Activated naive CD4-positive, alpha-beta T cell treated with anti-CD3 and anti-CD28 coated beads for 36 hours (primary cell): ENCODE measurements at regions of chr22 and their contacts with region 1.

Region 1: DNA sequence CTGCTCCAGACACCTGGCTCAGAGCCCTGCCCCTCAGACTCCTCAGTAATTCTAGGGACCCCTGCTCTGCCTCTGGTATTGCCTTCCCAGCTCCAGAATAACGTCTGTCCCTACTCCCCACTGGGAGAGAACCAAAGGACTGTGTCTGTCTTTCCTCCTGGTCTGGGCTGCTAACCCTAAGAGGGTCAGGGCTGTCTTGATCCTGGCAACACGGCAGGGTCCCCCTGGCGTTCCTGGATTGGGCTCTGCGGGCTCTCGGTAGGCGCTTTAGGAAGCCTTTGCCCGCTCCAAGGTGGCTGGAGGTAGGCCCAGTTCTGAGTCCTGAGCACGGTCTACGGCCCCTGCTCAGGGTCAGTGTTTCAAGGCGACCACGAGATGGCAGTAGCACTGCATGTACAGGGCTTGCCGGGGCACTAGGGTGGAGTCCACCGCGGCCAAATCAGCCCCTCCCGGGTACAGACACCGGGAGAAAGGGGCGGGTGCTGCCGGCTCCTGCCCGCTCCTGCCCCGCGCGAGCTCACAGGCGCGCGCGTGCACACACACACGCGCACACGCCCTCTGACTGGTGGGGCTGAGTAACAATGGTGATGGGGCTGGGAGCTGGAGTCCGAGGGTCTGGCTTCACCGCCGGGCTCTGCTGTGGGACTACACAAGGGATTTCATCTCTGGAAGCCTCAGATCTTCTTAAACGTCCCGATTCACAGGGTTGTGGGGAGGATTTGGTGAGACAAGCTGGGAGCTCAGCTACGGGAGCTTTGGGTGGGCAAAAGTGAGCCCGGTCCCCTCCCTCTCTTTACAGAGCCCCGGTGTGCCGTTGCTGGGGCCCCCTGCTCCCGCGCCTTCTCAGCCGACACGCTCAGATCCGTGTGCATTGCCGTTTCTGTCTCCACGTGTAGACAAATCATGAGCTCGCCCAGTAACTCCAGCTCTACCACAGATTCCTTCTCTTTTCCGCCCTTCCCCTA is 30.1 kb upstream of the HMOX1 start:
- DNase-seq: peak; percentile 90
- H3K4me3 Mint-ChIP-seq: peak overlapping the region; percentile 59
- H3K27ac Mint-ChIP-seq: no peak overlapping the region
- H3K4me1 Mint-ChIP-seq: peaks cover 25% of the 10 kb centered on the region
- H3K27me3 Mint-ChIP-seq: peaks cover 9% of the 10 kb centered on the region

Region 2: DNA sequence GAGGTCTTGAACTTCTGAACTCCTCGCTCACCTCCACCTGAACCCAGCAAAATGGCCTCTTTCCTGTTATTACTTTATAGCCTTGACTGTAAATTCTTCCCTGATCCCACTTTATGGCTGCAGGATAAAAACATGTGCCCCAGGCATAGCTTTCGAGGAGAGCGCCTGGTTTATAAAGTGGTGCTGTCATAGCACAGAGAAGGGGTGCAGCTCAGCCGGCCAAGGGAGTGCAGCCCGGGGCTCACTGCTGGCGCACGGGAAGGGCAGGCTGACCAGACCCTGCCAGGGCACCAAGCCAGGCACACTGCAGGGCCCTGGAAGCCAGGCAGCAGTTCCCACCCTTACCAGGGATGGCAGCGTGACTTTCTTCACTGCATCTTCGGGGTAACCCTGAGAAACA is 234.0 kb before region 1 on chr22:
- CTCF ChIA-PET with region 1: no interaction called
- intact Hi-C with region 1: no loop called
- DNase-seq: no peak
- H3K4me3 Mint-ChIP-seq: no peak overlapping the region
- H3K27ac Mint-ChIP-seq: no peak overlapping the region
- H3K4me1 Mint-ChIP-seq: no peaks in the 10 kb centered on the region
- H3K27me3 Mint-ChIP-seq: no peaks in the 10 kb centered on the region

Region 3: DNA sequence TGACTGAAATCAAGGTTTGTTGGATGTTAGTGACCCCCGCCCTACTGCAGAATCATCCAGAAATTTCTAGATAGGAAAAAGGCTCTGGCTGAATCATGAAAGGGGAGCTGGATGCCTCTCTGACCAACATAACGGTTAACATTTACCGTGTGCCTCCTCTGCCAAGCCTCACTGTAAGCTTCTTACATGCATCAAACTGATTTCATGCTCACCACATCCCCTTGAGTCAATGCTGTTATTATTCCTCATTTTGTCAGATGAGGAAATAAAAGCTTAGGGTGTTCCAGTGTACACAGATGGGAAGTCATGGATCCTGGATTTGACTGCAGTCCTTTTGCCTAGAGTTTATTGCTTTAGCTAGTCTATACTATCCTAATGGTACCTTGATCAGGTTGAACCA is 24.2 kb after region 1 on chr22:
- CTCF ChIA-PET with region 1: interaction called, 10 read pairs
- intact Hi-C with region 1: no loop called
- DNase-seq: no peak
- H3K4me3 Mint-ChIP-seq: no peak overlapping the region
- H3K27ac Mint-ChIP-seq: no peak overlapping the region
- H3K4me1 Mint-ChIP-seq: peaks cover 17% of the 10 kb centered on the region
- H3K27me3 Mint-ChIP-seq: peaks cover 3% of the 10 kb centered on the region

Region 4: DNA sequence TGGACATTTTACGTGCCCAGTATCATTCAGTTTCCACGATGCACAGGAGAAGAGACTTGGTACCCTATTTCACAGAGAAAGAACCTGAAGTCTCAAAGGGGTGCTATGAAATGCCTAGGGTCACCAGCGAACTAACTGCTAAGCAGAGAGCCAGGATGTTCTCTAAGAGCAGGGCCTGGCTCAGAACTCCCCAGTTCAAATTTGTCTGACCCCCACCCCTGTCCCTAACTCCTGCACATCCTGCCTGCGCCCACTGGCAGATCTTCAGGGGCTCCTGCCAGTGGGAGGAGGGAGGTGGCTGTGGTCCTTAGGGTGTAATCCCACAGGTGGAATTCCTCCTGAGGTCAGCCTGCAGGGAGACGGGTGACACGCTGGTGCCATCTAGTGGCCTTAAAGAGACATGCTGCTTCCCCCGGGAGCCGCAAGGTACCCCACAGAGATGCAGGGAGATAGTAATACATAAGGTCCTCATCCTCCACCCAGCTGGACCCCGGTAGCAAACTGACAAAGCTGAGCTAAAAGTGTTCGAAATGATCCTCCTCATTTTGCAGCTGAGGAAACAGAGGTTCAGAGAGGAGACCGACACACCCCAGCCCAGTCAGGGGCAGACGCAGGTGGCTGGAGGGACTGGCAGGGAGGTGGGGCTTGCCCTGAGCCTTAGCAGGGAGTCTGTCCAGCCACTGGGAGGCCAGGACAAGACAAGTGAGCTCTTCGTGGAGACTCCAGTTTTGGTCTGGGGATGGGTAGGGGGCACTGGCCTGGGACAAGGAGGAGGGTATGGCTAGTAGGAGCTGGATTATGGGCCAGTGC is 232.2 kb after region 1 on chr22:
- CTCF ChIA-PET with region 1: interaction called, 44 read pairs
- intact Hi-C with region 1: loop called (anchors 1 kb)
- DNase-seq: peak; percentile 55
- H3K4me3 Mint-ChIP-seq: no peak overlapping the region
- H3K27ac Mint-ChIP-seq: no peak overlapping the region
- H3K4me1 Mint-ChIP-seq: no peaks in the 10 kb centered on the region
- H3K27me3 Mint-ChIP-seq: no peaks in the 10 kb centered on the region

Region 5: GRCh38 chr22:35921777-35922176 is 571.0 kb after region 1 on chr22:
- CTCF ChIA-PET with region 1: interaction called, 5 read pairs
- intact Hi-C with region 1: loop called (anchors 1 kb)
- DNase-seq: peak; percentile 69
- H3K4me3 Mint-ChIP-seq: no peak overlapping the region
- H3K27ac Mint-ChIP-seq: no peak overlapping the region
- H3K4me1 Mint-ChIP-seq: peaks cover 4% of the 10 kb centered on the region
- H3K27me3 Mint-ChIP-seq: no peaks in the 10 kb centered on the region

Region 6: DNA sequence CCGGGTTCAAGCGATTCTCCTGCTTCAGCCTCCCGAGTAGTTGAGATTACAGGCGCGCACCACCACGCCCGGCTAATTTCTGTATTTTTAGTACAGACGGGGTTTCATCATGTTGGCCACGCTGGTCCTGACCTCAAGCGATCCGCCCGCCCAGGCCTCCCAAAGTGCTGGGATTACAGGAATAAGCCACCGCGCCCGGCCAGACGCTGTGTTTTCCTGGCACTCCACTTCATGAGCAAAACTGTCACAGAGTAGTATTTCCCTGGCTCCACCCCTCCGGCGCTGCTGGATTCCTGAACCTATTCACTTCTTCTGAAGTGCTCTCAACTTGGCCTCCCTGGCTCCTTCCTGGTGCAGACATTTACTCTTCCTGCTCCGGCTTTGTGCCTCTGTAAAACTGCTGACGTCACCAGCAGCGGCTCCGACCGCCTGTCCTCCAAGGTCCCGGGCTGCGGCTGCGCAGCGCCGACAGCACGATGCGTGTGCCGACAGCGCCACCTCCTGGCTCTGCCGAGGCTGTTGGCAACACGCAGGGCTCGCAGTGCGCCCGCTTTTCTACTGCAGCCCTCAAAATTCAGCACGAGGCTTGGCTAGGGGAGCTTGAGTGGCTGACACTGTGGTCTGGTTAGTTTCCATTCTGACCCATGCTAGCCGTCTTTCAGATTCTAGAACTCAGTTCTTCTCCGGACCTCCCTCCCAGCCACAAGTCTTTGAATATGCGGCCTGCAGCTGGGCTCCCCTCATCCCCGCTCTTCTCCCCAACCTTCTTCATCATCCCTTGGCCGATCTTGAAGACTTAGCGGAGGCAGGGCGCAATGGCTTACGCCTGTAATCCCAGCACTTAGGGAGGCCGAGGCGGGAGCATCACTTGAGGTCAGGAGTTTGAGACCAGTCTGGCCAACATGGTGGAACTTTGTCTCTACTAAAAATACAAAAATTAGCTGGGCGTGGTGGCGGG is 773.1 kb after region 1 on chr22:
- CTCF ChIA-PET with region 1: interaction called, 3 read pairs
- intact Hi-C with region 1: loop called (anchors 1 kb)
- DNase-seq: peak; percentile 95
- H3K4me3 Mint-ChIP-seq: peak overlapping the region; percentile 69
- H3K27ac Mint-ChIP-seq: peak overlapping the region; percentile 86
- H3K4me1 Mint-ChIP-seq: peaks cover 14% of the 10 kb centered on the region
- H3K27me3 Mint-ChIP-seq: no peaks in the 10 kb centered on the region